ENCODE measurements at regions of chr4 and their contacts with region 1.

Region 1: GRCh38 chr4:108398316-108398715 is 222.1 kb upstream of the RPL34 start:
- DNase-seq: peak in 1 of 2 donors; percentile 30
- H3K4me3 ChIP-seq: no peak overlapping the region
- H3K27ac ChIP-seq: no peak overlapping the region
- H3K4me1 ChIP-seq: no peaks in the 10 kb centered on the region
- H3K27me3 ChIP-seq: no peaks in the 10 kb centered on the region
- CTCF ChIP-seq: no peak
- POLR2A ChIP-seq: no peak

Region 2: GRCh38 chr4:108369035-108369655 is 29.2 kb before region 1 on chr4:
- intact Hi-C with region 1: loop called (anchors 1 kb)
- DNase-seq: no peak
- H3K4me3 ChIP-seq: no peak overlapping the region
- H3K27ac ChIP-seq: no peak overlapping the region
- H3K4me1 ChIP-seq: no peaks in the 10 kb centered on the region
- H3K27me3 ChIP-seq: peaks cover 0 to 26% of the 10 kb centered on the region in 2 donors
- CTCF ChIP-seq: no peak
- POLR2A ChIP-seq: no peak

Measured in breast epithelium (tissue), 4 donors.